ENCODE measurements at regions of chr11 and their contacts with region 1.

Region 1: GRCh38 chr11:65662799-65663638 is at the start of gene RELA:
- DNase-seq: peak; percentile 87
- H3K4me3 Mint-ChIP-seq: peak within 1 kb of the TSS; percentile 86
- H3K27ac Mint-ChIP-seq: peak within 1 kb of the TSS; percentile 92
- H3K4me1 Mint-ChIP-seq: peaks cover 19% of the 10 kb centered on the region
- H3K27me3 Mint-ChIP-seq: no peaks in the 10 kb centered on the region
- total RNA-seq, gene RELA: 86.9 and 89.3 TPM in 2 replicates

Region 2: DNA sequence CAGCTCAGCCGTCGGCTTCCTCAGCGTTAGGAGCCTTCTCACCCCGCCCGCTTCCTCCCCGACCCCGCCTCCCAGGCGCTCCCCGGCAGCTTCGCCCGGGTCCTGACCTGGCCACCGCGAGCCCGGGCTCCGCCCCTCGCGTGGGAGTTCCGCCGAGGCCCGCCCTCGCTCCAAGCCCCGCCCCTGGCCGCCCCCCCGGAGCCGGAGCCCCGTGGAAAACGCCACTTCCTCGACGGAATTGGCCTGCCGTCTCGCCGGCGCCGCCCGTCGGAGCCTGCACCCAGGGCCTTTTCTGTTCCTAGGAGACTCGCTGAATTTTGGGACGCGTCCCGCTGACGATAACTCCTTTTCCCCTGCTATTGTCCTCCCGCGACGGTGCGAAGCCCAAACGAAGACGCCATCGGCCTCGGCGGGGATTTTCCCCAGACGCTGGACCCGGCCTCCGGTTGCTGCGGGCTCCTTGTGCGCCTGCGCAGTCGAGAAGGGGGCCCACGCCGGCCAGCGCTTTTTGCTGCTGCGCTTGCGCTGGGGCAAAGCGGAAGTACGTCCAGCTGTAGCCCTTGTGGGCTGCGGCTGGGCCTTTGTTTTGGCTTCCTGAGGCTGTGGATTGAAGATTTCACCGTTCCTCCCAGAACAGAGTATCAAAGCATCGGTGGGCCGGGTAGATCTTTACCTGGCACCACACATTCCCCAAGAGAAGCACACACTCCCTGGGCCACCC is 10.3 kb before region 1 on chr11:
- intact Hi-C with region 1: loop called (anchors 1 kb)
- DNase-seq: peak; percentile 96
- H3K4me3 Mint-ChIP-seq: peak overlapping the region; percentile 79
- H3K27ac Mint-ChIP-seq: peak overlapping the region; percentile 88
- H3K4me1 Mint-ChIP-seq: peaks cover 30% of the 10 kb centered on the region
- H3K27me3 Mint-ChIP-seq: no peaks in the 10 kb centered on the region

Region 3: DNA sequence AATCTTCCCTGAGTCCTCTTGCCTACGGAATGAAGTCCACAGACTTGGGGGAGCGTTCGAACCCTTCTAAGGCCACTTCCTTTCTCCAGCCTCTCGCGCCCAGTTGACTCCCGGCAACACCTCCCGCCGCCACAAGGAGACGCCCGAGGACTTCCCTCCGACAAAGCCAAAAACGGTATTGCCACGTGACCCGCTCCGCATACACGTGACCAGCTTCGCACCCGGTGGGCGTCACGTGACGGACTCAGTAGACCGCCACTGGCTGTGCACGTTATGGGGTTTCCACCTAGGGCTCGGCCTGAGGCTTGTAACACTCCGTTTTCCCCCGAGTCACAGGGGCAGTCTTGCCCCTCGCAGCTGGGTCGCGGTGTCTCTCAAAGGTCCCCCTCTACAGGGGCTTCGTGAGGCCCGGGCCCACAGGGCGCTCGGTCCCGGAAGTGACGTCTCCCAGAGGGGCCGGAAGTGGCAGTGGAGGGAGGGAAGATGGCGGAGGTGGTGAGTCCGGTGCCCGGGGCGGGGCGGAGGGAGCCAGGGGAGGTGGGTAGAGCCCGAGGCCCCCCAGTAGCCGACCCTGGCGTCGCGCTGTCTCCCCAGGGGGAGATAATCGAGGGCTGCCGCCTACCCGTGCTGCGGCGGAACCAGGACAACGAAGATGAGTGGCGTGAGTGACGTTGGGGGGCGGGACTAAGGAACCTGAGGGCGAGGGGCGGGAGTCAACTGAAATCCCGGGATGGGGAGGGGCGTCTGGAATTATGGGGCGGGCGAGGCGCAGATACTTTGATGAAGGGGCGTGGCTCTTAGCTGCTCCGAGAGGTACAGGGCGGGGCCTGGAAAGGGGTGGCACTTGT is 49.0 kb after region 1 on chr11 and contains the start of gene KAT5:
- intact Hi-C with region 1: no loop called
- DNase-seq: peak; percentile 99
- H3K4me3 Mint-ChIP-seq: peak within 1 kb of the TSS; percentile 89
- H3K27ac Mint-ChIP-seq: peak within 1 kb of the TSS; percentile 91
- H3K4me1 Mint-ChIP-seq: peaks cover 25% of the 10 kb centered on the region
- H3K27me3 Mint-ChIP-seq: no peaks in the 10 kb centered on the region
- total RNA-seq, gene KAT5: 76.3 and 79.4 TPM in 2 replicates

Measured in activated T-helper 2 cell treated with anti-CD3 and anti-CD28 coated beads, Interferon-gamma antibody, Interleukin-2, Interleukin-4, amounts not matched to agents 10 μg/mL and 5 μg/mL and 100 μg/mL, durations not matched to agents 14 hours and 24 hours and 36 hours (primary cell).